B cell (primary cell): ENCODE measurements at regions of chr17 and their contacts with region 1.

Region 1: DNA sequence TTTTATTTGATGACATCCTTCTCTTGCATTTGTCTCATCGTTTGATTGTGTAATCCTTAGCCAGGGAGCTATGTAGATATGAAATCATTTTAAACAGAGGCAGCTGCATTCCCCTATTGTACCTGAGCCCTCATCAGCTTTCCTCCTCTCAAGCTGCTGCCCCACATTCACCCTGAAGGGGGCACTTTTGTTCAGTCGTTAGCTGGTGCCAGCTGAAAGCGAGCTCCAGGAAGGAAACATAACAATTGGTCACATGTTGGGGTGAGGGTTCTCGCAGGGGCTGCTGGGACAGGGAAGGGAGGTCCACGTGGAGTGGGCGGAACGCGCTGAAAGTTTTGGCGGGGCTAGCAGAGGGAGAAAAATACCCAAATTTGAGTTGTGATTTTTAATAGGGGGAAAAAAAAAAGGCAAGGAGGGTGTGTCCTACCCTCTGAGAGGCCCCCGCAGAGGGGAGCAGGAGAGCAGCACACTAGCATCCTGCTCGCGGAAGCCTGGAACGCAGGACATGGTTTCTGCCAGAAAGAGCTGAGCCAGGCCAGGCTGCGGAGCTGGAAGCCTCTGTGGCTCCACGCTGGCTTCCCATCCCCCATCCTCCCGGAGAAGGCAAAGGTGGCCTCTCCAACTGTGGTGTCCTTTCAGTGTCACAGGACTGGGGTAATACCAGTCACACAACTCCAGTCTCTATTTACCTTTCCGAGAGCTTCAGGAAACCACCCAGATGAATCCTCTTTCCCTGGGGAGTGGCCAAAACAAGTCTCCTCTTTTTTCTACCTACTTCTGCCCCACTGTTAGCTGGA is 8.5 kb upstream of the MSL1 start:
- DNase-seq: peak; percentile 94
- ATAC-seq: peak; percentile 86
- H3K4me3 ChIP-seq: peak overlapping the region in 4 of 5 experiments; percentile 36 to 62 (median 58)
- H3K4me3 Mint-ChIP-seq: peak overlapping the region; percentile 92
- H3K27ac ChIP-seq: peak overlapping the region; percentile 28 to 40
- H3K27ac Mint-ChIP-seq: peak overlapping the region; percentile 89
- H3K4me1 ChIP-seq: peaks cover 34 to 41% of the 10 kb centered on the region in 2 donors
- H3K4me1 Mint-ChIP-seq: peaks cover 43% of the 10 kb centered on the region
- H3K27me3 ChIP-seq: no peaks in the 10 kb centered on the region
- H3K27me3 Mint-ChIP-seq: no peaks in the 10 kb centered on the region
- CTCF ChIP-seq: peak; percentile 84

Region 2: GRCh38 chr17:40038882-40039513 is 74.3 kb before region 1 on chr17:
- CTCF ChIA-PET with region 1: interaction called, 16 read pairs
- POLR2A ChIA-PET with region 1: interaction called, 6 read pairs
- intact Hi-C with region 1: no loop called
- DNase-seq: no peak
- ATAC-seq: no peak
- H3K4me3 ChIP-seq: no peak overlapping the region
- H3K4me3 Mint-ChIP-seq: no peak overlapping the region
- H3K27ac ChIP-seq: no peak overlapping the region
- H3K27ac Mint-ChIP-seq: no peak overlapping the region
- H3K4me1 ChIP-seq: no peaks in the 10 kb centered on the region
- H3K4me1 Mint-ChIP-seq: no peaks in the 10 kb centered on the region
- H3K27me3 ChIP-seq: no peaks in the 10 kb centered on the region
- H3K27me3 Mint-ChIP-seq: no peaks in the 10 kb centered on the region
- CTCF ChIP-seq: peak; percentile 28

Region 3: GRCh38 chr17:40086150-40087044 is 26.9 kb before region 1 on chr17:
- CTCF ChIA-PET with region 1: interaction called, 85 read pairs
- POLR2A ChIA-PET with region 1: interaction called, 4 read pairs
- intact Hi-C with region 1: loop called (anchors 1 kb)
- DNase-seq: peak; percentile 72
- ATAC-seq: peak; percentile 78
- H3K4me3 ChIP-seq: no peak overlapping the region
- H3K4me3 Mint-ChIP-seq: no peak overlapping the region
- H3K27ac ChIP-seq: no peak overlapping the region
- H3K27ac Mint-ChIP-seq: no peak overlapping the region
- H3K4me1 ChIP-seq: no peaks in the 10 kb centered on the region
- H3K4me1 Mint-ChIP-seq: peaks cover 3% of the 10 kb centered on the region
- H3K27me3 ChIP-seq: no peaks in the 10 kb centered on the region
- H3K27me3 Mint-ChIP-seq: no peaks in the 10 kb centered on the region
- CTCF ChIP-seq: peak; percentile 85

Region 4: DNA sequence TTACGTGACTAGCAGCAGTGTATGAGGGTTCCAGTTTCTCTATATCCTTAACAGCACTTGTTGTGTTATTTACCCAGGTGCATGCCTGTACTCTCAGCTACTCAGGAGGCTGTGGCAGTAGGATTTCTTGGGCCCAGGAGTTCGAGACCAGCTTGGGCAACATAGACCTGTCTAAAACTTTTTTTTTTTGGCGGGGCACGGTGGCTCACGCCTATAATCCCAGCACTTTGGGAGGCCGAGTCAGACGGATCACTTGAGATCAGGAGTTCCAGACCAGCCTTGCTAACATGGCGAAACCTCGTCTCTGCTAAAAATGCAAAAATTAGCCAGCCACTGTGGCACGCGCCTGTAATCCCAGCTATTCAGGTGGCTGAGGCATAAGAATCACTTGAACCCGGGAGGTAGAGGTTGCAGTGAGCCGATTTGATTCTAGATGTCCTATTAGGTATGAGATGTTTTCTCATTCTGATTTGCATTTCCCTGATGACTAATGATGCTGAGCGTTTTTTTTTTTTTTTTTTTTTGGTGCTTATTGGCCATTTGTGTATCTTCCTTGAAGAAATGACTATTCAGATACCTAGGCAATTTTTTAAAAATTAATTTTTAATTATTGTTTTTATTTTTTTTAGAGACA is 40.4 kb after region 1 on chr17:
- CTCF ChIA-PET with region 1: interaction called, 12 read pairs
- POLR2A ChIA-PET with region 1: no interaction called
- intact Hi-C with region 1: no loop called
- DNase-seq: no peak
- ATAC-seq: no peak
- H3K4me3 ChIP-seq: no peak overlapping the region
- H3K4me3 Mint-ChIP-seq: no peak overlapping the region
- H3K27ac ChIP-seq: no peak overlapping the region
- H3K27ac Mint-ChIP-seq: peak overlapping the region; percentile 56
- H3K4me1 ChIP-seq: peaks cover 0 to 7% of the 10 kb centered on the region in 2 donors
- H3K4me1 Mint-ChIP-seq: peaks cover 34% of the 10 kb centered on the region
- H3K27me3 ChIP-seq: no peaks in the 10 kb centered on the region
- H3K27me3 Mint-ChIP-seq: no peaks in the 10 kb centered on the region
- CTCF ChIP-seq: no peak

Region 5: GRCh38 chr17:40191237-40192208 is 78.2 kb after region 1 on chr17:
- CTCF ChIA-PET with region 1: interaction called, 87 read pairs
- POLR2A ChIA-PET with region 1: interaction called, 4 read pairs
- intact Hi-C with region 1: loop called (anchors 1 kb)
- DNase-seq: peak; percentile 87
- ATAC-seq: peak; percentile 89
- H3K4me3 ChIP-seq: peak overlapping the region; percentile 17 to 76 (median 60)
- H3K4me3 Mint-ChIP-seq: peak overlapping the region; percentile 99
- H3K27ac ChIP-seq: no peak overlapping the region
- H3K27ac Mint-ChIP-seq: peak overlapping the region; percentile 89
- H3K4me1 ChIP-seq: peaks cover 11 to 17% of the 10 kb centered on the region in 2 donors
- H3K4me1 Mint-ChIP-seq: peaks cover 23% of the 10 kb centered on the region
- H3K27me3 ChIP-seq: no peaks in the 10 kb centered on the region
- H3K27me3 Mint-ChIP-seq: no peaks in the 10 kb centered on the region
- CTCF ChIP-seq: peak; percentile 79

Region 6: DNA sequence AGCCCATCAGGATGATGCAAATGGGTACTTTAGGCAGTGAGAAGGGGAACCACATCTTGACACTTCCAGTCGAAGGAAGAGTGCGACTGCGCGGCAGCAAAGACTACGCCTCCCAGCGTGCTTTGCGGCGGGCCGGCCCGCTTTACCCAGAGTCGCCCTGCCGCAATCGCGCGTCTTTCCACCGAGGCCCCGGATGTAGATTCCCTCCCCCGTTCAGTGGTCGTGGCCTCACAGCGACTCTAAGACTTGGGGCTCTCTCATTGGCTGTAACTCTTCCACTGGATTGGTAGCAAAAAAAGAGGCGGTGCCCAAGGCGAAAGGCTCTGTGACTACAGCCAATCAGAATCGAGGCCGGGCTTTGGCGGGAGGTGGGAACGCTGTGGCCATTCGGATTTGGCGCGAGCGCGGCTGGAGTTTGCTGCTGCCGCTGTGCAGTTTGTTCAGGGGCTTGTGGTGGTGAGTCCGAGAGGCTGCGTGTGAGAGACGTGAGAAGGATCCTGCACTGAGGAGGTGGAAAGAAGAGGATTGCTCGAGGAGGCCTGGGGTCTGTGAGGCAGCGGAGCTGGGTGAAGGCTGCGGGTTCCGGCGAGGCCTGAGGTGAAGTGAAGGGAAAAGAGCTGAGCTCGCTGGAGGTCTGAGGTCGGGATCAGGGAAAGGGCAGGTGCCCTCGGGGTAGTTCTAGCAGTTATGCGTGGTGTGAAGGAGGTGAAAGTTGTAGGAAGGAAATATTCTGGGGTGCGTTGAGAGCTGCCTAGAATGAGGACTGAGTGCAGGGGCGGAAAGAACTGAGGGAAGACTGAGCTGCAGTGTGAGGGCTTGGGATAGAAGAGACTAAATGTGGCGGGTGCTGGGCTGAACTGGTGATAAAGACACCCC is 174.4 kb after region 1 on chr17 and contains the start of gene CDC6:
- CTCF ChIA-PET with region 1: interaction called, 23 read pairs
- POLR2A ChIA-PET with region 1: no interaction called
- intact Hi-C with region 1: loop called (anchors 1 kb)
- DNase-seq: peak; percentile 99
- ATAC-seq: peak; percentile 95
- H3K4me3 ChIP-seq: peak within 1 kb of the TSS; percentile 27 to 85 (median 69)
- H3K4me3 Mint-ChIP-seq: peak within 1 kb of the TSS; percentile 97
- H3K27ac ChIP-seq: peak within 1 kb of the TSS in 1 of 2 donors; percentile 42
- H3K27ac Mint-ChIP-seq: peak within 1 kb of the TSS; percentile 70
- H3K4me1 ChIP-seq: peaks cover 9 to 11% of the 10 kb centered on the region in 2 donors
- H3K4me1 Mint-ChIP-seq: peaks cover 15% of the 10 kb centered on the region
- H3K27me3 ChIP-seq: no peaks in the 10 kb centered on the region
- H3K27me3 Mint-ChIP-seq: no peaks in the 10 kb centered on the region
- CTCF ChIP-seq: no peak
- total RNA-seq, gene CDC6: 0.63 and 2.2 TPM in 2 replicates